Activated B cell treated with CpG ODN at 0.5 μM for 24 hours (primary cell): ENCODE measurements at regions of chr12 and their contacts with region 1.

Region 1: DNA sequence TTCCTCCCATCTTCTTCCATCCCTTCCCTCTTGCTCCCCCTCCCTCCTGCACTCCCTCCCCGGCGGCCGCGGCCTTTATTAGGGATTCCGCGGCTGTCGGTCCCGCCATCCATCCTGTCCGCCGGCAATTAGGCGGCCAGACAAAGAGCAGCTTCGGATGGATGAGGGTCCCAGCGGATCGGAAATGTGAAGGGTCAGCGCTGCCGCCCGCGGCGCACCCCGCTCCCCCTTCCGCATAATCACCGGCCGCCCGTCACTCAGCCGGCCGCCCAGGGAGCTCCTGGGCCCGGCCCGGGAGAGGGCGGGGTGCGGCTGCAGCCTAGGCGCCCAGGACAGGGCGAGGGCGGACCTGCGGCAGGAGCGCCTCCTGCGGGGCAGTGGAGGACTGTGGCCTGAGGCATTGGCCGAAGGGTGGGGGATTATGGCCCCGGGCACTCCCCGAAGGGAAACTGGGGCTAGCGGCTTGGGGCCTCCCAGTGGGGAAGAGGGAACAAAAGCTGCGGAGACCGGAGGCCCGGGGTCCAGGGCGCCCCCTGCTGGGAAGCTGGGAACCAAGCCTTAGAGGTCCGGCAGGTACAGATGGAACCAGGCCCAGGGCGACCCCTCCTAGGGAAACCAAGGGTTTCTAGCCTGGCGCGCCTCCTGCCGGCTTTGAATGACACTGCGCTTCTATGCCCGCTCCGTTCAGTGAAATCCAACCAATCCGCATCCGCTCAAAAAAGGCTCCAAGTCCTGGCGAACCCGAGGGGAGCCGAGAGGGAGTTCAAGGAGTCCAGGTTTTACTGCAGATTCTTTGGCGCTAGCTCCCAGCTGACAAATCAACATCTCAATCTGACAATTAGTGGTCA is 4.4 kb upstream of the DNAJC22 start:
- DNase-seq: peak; percentile 71
- ATAC-seq: peak; percentile 75
- H3K4me3 Mint-ChIP-seq: peak overlapping the region; percentile 67
- H3K27ac Mint-ChIP-seq: no peak overlapping the region
- H3K4me1 Mint-ChIP-seq: peaks cover 53% of the 10 kb centered on the region
- H3K27me3 Mint-ChIP-seq: peaks cover 39% of the 10 kb centered on the region
- CTCF ChIP-seq: peak; percentile 24

Region 2: GRCh38 chr12:47904713-47905310 is 1437.5 kb before region 1 on chr12 and contains the start of gene VDR:
- CTCF ChIA-PET with region 1: no interaction called
- POLR2A ChIA-PET with region 1: no interaction called
- intact Hi-C with region 1: no loop called
- DNase-seq: peak; percentile 59
- ATAC-seq: peak; percentile 83
- H3K4me3 Mint-ChIP-seq: peak within 1 kb of the TSS; percentile 87
- H3K27ac Mint-ChIP-seq: peak within 1 kb of the TSS; percentile 41
- H3K4me1 Mint-ChIP-seq: peaks cover 23% of the 10 kb centered on the region
- H3K27me3 Mint-ChIP-seq: peaks cover 26% of the 10 kb centered on the region
- CTCF ChIP-seq: no peak
- total RNA-seq, gene VDR: 0.64 and 0.86 TPM in 2 replicates

Region 3: DNA sequence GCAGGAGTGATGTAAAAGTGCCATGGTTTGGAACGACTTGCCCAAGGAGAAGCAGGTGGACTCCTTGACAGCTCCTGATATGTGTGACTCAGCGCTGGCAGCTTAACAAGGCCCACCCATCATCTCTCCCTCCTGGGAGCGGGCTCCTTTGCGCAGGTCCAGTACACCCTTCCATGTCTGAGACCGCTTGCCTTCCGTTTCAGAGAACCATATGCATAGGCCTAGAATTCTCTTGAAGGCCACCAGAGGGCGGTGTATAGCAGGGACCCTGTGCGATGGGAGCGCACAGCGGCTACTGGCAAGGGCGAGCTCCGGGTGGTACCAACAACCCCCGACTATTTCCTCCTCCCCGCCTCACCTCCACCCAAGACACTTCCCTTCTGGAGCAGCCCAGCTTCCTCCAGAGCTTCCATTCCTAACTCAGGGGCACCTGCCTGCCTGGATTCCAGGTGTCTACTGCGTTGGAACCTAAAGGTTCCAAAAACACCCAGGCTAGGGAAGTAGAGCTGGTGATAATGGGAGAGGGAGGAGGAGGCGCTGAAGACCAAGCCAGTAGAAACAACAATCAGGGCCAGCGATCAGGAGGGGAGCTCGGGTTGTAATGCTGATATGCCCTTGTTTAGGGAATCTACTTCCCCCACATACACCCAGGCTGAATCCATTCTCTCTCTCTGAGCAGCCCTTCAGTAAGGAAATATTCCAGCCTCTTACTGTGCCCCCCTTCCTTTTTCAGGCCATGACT is 253.9 kb before region 1 on chr12:
- CTCF ChIA-PET with region 1: no interaction called
- POLR2A ChIA-PET with region 1: no interaction called
- intact Hi-C with region 1: loop called (anchors 2 kb)
- DNase-seq: peak; percentile 53
- ATAC-seq: peak; percentile 93
- H3K4me3 Mint-ChIP-seq: peak overlapping the region; percentile 64
- H3K27ac Mint-ChIP-seq: no peak overlapping the region
- H3K4me1 Mint-ChIP-seq: peaks cover 42% of the 10 kb centered on the region
- H3K27me3 Mint-ChIP-seq: peaks cover 45% of the 10 kb centered on the region
- CTCF ChIP-seq: peak; percentile 35

Region 4: GRCh38 chr12:49288412-49288853 is 53.9 kb before region 1 on chr12:
- CTCF ChIA-PET with region 1: interaction called, 54 read pairs
- POLR2A ChIA-PET with region 1: interaction called, 6 read pairs
- intact Hi-C with region 1: loop called (anchors 1 kb)
- DNase-seq: peak; percentile 41
- ATAC-seq: peak; percentile 72
- H3K4me3 Mint-ChIP-seq: no peak overlapping the region
- H3K27ac Mint-ChIP-seq: no peak overlapping the region
- H3K4me1 Mint-ChIP-seq: no peaks in the 10 kb centered on the region
- H3K27me3 Mint-ChIP-seq: peaks cover 32% of the 10 kb centered on the region
- CTCF ChIP-seq: peak; percentile 27

Region 5: DNA sequence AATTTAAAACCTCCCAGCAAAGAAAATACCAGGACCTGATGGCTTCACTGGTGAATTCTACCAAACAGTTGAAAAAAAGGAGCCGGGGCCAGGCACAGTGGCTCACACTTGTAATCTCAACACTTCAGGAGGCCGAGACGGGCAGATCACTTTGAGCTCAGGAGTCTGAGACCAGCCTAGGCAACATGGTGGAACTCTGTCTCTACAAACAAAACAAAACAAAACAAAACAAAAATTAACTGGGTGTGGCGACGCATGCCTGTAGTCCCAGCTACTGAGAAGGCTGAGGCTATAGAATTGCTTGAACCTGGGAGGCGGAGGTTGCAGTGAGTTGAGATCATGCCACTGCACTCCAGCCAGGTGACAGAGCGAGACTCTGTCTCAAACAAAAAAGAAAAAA is 32.9 kb before region 1 on chr12:
- CTCF ChIA-PET with region 1: no interaction called
- POLR2A ChIA-PET with region 1: no interaction called
- intact Hi-C with region 1: no loop called
- DNase-seq: no peak
- ATAC-seq: no peak
- H3K4me3 Mint-ChIP-seq: no peak overlapping the region
- H3K27ac Mint-ChIP-seq: no peak overlapping the region
- H3K4me1 Mint-ChIP-seq: no peaks in the 10 kb centered on the region
- H3K27me3 Mint-ChIP-seq: peaks cover 26% of the 10 kb centered on the region
- CTCF ChIP-seq: no peak

Region 6: GRCh38 chr12:49322708-49323523 is 19.4 kb before region 1 on chr12 and contains the start of gene TROAP:
- CTCF ChIA-PET with region 1: interaction called, 12 read pairs
- POLR2A ChIA-PET with region 1: interaction called, 11 read pairs
- intact Hi-C with region 1: loop called (anchors 1 kb)
- DNase-seq: peak; percentile 85
- ATAC-seq: peak; percentile 99
- H3K4me3 Mint-ChIP-seq: peak within 1 kb of the TSS; percentile 94
- H3K27ac Mint-ChIP-seq: peak within 1 kb of the TSS; percentile 73
- H3K4me1 Mint-ChIP-seq: peaks cover 18% of the 10 kb centered on the region
- H3K27me3 Mint-ChIP-seq: no peaks in the 10 kb centered on the region
- CTCF ChIP-seq: no peak
- total RNA-seq, gene TROAP: 2.0 and 3.1 TPM in 2 replicates

Region 7: GRCh38 chr12:49358483-49359141 is 16.3 kb after region 1 on chr12:
- CTCF ChIA-PET with region 1: interaction called, 41 read pairs
- POLR2A ChIA-PET with region 1: interaction called, 6 read pairs
- intact Hi-C with region 1: no loop called
- DNase-seq: no peak
- ATAC-seq: peak; percentile 96
- H3K4me3 Mint-ChIP-seq: no peak overlapping the region
- H3K27ac Mint-ChIP-seq: no peak overlapping the region
- H3K4me1 Mint-ChIP-seq: peaks cover 2% of the 10 kb centered on the region
- H3K27me3 Mint-ChIP-seq: peaks cover 13% of the 10 kb centered on the region
- CTCF ChIP-seq: no peak